Ascending aorta (tissue), 2 donors: ENCODE measurements at regions of chrX and their contacts with region 1.

Region 1: DNA sequence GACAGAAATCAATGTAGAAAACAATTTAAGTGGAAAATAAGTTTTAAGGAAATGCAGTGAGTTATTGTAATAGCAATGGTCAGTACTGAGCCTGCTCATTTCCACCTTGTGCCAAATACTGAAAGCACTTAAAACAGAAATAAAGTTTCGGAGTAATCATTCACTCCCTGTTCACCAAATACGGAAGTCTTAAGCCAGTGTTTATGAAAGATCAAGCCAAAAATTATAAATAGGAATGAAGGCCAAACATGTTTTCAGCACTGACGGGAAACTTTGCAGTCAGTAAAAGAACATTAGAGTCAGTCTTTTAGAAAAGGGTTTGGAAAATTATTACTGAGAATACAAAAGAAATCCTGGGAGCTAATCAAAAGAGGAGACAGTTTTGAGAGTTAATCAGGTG is 178.6 kb downstream of the DMD start:
- DNase-seq: no peak
- H3K4me3 ChIP-seq: peak overlapping the region in 1 of 2 donors; percentile 37
- H3K27ac ChIP-seq: peak overlapping the region; percentile 73 to 82
- H3K4me1 ChIP-seq: peaks cover 0 to 3% of the 10 kb centered on the region in 2 donors
- H3K27me3 ChIP-seq: no peaks in the 10 kb centered on the region
- CTCF ChIP-seq: no peak

Region 2: DNA sequence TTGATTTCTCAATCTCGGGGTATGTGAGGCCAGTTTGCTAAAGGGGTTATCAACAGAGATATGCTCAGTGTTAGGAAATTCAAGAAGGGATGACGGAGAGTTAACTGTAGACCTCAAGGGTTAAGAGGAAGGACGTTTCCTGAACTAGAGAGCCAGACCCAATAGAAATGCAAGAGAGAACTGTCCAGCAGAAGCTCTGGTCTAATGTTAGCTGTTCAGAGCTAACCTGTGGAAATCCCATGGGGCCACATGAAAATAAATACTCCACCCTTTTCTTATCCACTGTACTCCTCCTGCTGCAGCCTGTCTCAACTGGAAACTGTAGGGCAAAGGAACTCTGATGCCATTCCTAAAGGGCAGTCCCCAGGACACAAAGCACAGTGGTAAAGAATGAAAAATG is 95.7 kb before region 1 on chrX:
- intact Hi-C with region 1: no loop called
- DNase-seq: no peak
- H3K4me3 ChIP-seq: no peak overlapping the region
- H3K27ac ChIP-seq: no peak overlapping the region
- H3K4me1 ChIP-seq: no peaks in the 10 kb centered on the region
- H3K27me3 ChIP-seq: no peaks in the 10 kb centered on the region
- CTCF ChIP-seq: no peak

Region 3: GRCh38 chrX:33156152-33156726 is 123.5 kb after region 1 on chrX:
- intact Hi-C with region 1: no loop called
- DNase-seq: no peak
- H3K4me3 ChIP-seq: no peak overlapping the region
- H3K27ac ChIP-seq: peak overlapping the region; percentile 19 to 51
- H3K4me1 ChIP-seq: no peaks in the 10 kb centered on the region
- H3K27me3 ChIP-seq: no peaks in the 10 kb centered on the region
- CTCF ChIP-seq: no peak

Region 4: DNA sequence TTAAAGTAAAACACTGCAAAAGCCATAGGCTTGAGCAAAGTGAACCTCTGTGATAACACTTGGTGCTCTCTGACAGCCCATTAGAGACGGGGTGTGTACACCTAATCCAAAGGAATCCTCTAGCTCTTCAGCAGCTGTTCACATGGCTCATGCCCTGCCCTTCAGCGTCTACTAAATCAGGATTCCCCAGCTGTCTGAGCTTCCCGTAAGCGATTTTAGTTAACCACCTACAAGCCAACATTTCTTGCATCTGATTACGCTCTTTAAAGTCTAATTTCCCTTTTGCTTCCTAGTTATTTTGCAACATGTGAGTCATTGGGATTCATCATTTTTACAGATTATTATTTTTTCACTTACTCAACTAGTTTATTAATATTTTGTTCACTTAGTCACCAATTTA is 172.2 kb after region 1 on chrX:
- intact Hi-C with region 1: loop called (anchors 10 kb)
- DNase-seq: no peak
- H3K4me3 ChIP-seq: peak overlapping the region; percentile 28 to 57
- H3K27ac ChIP-seq: peak overlapping the region; percentile 63 to 68
- H3K4me1 ChIP-seq: no peaks in the 10 kb centered on the region
- H3K27me3 ChIP-seq: no peaks in the 10 kb centered on the region
- CTCF ChIP-seq: no peak